ENCODE measurements at regions of chr16 and their contacts with region 1.

Region 1: GRCh38 chr16:67428146-67428731 is 2.7 kb upstream of the HSD11B2 start:
- DNase-seq: peak; percentile 67 to 86
- ATAC-seq: peak; percentile 52 to 86
- H3K4me3 ChIP-seq: no peak overlapping the region
- H3K27ac ChIP-seq: no peak overlapping the region
- H3K4me1 ChIP-seq: peaks cover 9% of the 10 kb centered on the region; the same call in 2 of the 3 replicates
- CTCF ChIP-seq: peak; percentile 78
- EP300 ChIP-seq: no peak
- POLR2A ChIP-seq: no peak
- RAD21 ChIP-seq: peak; percentile 71 to 75

Region 2: GRCh38 chr16:67260426-67261075 is 167.7 kb before region 1 on chr16:
- CTCF ChIA-PET with region 1: interaction called, 16 read pairs
- POLR2A ChIA-PET with region 1: no interaction called
- DNase-seq: peak in 1 of 2 experiments; percentile 61
- ATAC-seq: peak; percentile 48 to 75; a peak in 4 of 6 replicates
- H3K4me3 ChIP-seq: no peak overlapping the region
- H3K27ac ChIP-seq: no peak overlapping the region
- H3K4me1 ChIP-seq: no peaks in the 10 kb centered on the region
- CTCF ChIP-seq: peak; percentile 58
- EP300 ChIP-seq: no peak
- POLR2A ChIP-seq: no peak
- RAD21 ChIP-seq: peak; percentile 69 to 77

Region 3: DNA sequence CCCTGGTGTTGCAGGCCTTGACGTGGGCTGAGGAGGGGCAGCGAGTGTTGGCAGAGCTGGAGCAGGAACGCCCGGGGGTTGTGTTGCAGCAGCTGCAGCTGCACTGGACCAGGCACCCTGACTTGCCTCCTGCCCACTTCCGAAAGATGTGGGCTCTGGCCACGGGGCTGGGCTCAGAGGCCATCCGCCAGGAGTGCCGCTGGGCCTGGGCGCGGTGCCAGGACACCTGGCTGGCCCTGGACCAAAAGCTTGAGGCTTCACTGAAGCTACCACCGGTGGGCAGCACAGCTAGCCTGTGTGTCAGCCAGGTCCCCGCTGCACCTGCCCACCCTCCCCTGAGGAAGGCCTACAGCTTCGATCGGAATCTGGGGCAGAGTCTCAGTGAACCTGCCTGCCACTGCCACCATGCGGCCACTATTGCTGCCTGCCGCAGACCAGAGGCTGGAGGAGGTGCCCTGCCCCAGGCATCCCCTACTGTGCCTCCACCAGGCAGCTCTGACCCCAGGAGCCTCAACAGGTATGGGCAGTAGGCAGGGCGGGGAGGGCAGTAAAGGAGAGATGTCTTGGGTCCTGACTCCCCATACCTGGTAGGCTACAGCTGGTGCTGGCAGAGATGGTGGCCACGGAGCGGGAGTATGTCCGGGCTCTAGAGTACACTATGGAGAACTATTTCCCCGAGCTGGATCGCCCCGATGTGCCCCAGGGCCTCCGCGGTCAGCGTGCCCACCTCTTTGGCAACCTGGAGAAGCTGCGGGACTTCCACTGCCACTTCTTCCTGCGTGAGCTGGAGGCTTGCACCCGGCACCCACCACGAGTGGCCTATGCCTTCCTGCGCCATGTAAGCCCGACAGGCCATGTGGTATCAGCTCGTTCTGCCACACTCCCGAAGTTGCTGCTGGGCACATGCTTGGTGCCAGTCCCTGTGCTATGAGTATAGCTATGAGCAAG is 143.3 kb before region 1 on chr16:
- CTCF ChIA-PET with region 1: interaction called, 14 read pairs
- POLR2A ChIA-PET with region 1: no interaction called
- DNase-seq: peak; percentile 44 to 61
- ATAC-seq: peak; percentile 63 to 88; a peak in 5 of 6 replicates
- H3K4me3 ChIP-seq: no peak overlapping the region
- H3K27ac ChIP-seq: no peak overlapping the region
- H3K4me1 ChIP-seq: peaks cover 14% of the 10 kb centered on the region; the same call in 2 of the 3 replicates
- CTCF ChIP-seq: peak; percentile 48
- EP300 ChIP-seq: no peak
- POLR2A ChIP-seq: no peak
- RAD21 ChIP-seq: peak; percentile 39 to 57

Region 4: DNA sequence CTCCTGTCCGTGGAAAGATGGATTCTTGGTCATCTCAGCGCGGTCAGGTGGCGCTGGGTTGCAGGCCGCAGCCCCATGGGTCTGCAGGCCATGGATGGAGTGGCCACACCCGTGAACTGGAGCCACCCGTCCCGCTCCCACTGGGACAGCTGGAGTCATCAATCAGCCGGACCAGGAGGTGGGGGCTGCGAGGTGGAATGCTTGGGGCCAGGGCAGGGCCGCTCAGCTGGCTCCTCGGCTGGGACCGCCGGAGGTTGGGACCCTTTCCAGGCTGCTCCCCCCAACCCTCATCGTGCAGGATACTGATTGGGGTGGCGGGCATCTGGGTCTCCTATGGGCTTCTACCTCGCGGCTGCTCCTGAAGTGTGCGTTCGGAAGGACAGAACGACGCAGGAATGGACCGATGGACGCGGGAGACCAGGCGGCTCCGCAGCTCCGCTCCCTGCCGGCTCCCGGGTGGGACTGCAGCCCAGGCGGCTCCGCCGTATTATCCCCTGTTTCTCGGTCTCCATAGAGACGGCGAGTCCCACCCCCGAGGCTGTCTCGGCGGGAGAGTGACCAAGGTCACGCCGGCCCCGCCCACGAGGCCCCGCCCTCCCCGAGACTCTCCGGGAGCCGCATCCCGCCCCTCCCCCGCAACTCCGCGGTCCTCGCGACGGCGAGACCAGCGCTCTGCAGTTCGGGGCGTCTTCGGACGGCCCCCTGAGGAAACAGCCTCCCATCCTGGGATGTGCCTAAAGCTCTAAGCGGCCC is 35.0 kb before region 1 on chr16 and contains the start of gene TPPP3:
- CTCF ChIA-PET with region 1: interaction called, 10 read pairs
- POLR2A ChIA-PET with region 1: no interaction called
- DNase-seq: peak; percentile 73
- ATAC-seq: peak; percentile 56 to 80
- H3K4me3 ChIP-seq: peak within 1 kb of the TSS; percentile 41
- H3K27ac ChIP-seq: peak within 1 kb of the TSS; percentile 46 to 75; a peak in 5 of 6 replicates
- H3K4me1 ChIP-seq: peaks cover 15% of the 10 kb centered on the region
- CTCF ChIP-seq: peak; percentile 15; the same call in 1 of the 3 replicates
- EP300 ChIP-seq: no peak
- POLR2A ChIP-seq: 0 out of 2 replicates have a peak, but pooled peaks have one; percentile 6
- RAD21 ChIP-seq: peak in 1 of 2 experiments; percentile 34; a peak in 1 of 5 replicates
- polyA plus RNA-seq, gene TPPP3: 9.4 and 10.6 TPM in 2 replicates

Region 5: DNA sequence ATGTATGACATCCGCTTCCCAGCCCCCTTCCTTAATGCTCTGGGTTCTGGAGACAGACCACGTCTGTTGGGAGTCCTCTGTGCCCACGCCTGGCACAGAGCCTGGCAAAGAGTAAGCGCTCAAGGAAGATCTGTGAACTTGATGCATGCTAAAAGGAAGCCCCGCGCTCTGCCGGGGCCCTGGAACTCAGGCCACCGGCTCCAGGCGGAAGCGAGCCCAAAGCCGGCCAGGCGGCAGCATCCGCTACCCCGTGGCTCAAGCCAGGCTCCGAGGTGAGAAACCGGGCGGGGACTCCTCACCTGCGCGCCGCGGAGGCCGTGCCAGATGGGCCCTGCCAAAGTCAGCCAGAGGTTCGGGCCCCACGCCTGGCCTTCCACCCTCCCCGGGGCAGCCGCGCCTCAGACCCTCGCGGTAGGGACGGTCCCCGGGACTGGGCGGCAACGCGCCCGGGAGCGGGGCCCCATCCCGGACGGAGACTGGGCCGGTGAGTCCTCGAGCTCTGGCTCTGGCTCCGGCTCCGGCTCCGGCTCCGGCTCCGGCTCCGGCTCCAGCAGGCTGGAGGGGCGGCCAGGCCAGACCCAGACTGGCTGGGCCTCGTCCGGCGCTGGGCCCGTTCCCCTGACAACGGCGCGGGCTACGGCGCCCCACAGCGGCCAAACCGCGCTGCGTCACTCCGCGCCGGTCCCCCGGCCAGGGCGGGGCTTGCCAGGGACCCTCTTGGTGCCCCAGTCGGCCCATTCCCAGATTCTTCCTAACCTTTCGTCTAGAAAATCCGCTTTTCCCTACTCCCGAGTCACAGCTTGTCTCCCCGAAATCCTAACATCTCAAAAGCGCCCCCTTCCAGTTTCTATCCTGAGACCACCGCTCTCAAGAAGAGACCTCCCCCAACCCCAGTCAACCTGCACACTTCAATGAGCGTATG is 12.1 kb before region 1 on chr16 and contains the start of gene ZDHHC1:
- CTCF ChIA-PET with region 1: interaction called, 52 read pairs
- POLR2A ChIA-PET with region 1: interaction called, 5 read pairs
- DNase-seq: peak; percentile 78 to 89
- ATAC-seq: peak; percentile 94 to 96
- H3K4me3 ChIP-seq: peak within 1 kb of the TSS; percentile 80
- H3K27ac ChIP-seq: peak within 1 kb of the TSS; percentile 91 to 96
- H3K4me1 ChIP-seq: peaks cover 9% of the 10 kb centered on the region; the same call in 2 of the 3 replicates
- CTCF ChIP-seq: peak; percentile 70
- EP300 ChIP-seq: no peak
- POLR2A ChIP-seq: peak; percentile 49; the same call in 1 of the 2 replicates
- RAD21 ChIP-seq: peak; percentile 49 to 69
- polyA plus RNA-seq, gene ZDHHC1: 3.5 and 3.8 TPM in 2 replicates

Region 6: GRCh38 chr16:67456391-67457081 is 28.3 kb after region 1 on chr16:
- CTCF ChIA-PET with region 1: interaction called, 207 read pairs
- POLR2A ChIA-PET with region 1: interaction called, 4 read pairs
- DNase-seq: peak; percentile 34 to 58
- ATAC-seq: peak; percentile 26 to 61; a peak in 3 of 6 replicates
- H3K4me3 ChIP-seq: no peak overlapping the region
- H3K27ac ChIP-seq: no peak overlapping the region
- H3K4me1 ChIP-seq: peaks cover 11% of the 10 kb centered on the region; the same call in 1 of the 3 replicates
- CTCF ChIP-seq: no peak; the same call in 2 of the 3 replicates
- EP300 ChIP-seq: no peak
- POLR2A ChIP-seq: no peak
- RAD21 ChIP-seq: no peak

Region 7: DNA sequence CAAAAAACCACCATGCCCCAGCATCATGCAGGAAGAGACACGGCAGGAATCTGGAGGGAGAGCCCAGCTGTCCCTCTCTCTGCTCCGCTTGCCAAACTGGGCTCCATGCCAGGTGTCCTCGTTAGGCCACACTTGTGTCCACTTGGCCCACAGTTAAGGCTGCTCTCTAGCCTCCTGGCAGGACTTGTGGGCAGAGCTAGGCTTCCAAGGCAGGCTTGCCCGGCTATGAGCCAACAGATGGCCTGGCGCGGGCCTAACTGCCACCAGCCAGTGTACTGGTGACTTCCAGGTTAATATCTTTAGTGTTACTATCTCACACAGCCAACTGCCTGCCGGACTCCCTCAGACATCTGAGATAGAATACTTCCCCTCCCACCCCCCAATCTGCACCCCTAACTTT is 42.1 kb after region 1 on chr16:
- CTCF ChIA-PET with region 1: interaction called, 176 read pairs
- POLR2A ChIA-PET with region 1: interaction called, 3 read pairs
- DNase-seq: no peak
- ATAC-seq: no peak
- H3K4me3 ChIP-seq: no peak overlapping the region
- H3K27ac ChIP-seq: no peak overlapping the region
- H3K4me1 ChIP-seq: peaks cover 4% of the 10 kb centered on the region; the same call in 2 of the 3 replicates
- CTCF ChIP-seq: no peak
- EP300 ChIP-seq: no peak
- POLR2A ChIP-seq: no peak
- RAD21 ChIP-seq: no peak

Measured in A549 (cell line).